Posterior vena cava (tissue), 2 donors: ENCODE measurements at regions of chr10 and their contacts with region 1.

Region 1: GRCh38 chr10:43890124-43890523 is 241.4 kb upstream of the ZNF32 start:
- DNase-seq: no peak

Region 2: DNA sequence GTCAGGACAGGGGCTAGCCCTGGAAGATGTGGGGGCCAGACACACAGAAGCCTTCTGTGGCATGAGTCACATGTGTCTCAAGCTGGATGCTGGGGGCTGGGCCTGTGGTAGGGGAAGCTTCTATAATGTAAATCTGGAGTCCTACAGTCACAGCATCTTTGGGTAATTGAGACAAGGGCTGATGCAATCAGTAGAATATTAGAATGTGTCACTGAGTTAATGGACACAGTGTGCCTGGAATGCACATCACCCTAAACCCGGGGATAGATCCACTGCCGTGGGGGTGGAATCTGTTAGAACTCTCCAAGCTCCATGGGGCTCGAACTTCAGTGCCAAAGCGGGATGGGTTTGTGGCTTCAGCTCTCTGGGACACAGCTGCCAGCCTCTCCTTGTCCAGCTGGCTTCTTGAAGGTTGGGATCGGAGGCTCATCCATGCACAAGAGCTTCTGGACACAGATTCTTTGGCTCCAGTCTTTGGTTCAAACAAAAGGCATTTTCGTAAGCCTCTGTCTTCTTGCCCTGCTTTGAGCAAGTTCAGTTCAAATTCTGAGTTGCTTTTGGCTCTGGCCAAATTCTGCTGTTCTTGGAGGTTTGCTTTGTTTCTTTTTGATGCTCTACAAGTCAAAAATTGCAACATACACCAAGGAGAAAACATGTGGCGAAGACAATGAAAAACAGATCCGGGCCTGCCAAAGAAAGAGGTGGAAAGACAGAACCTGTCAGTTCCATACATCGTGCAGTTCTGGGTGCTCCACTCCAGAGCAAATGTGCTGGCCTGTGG is 46.6 kb before region 1 on chr10:
- intact Hi-C with region 1: loop called in 1 of 2 experiments (anchors 2 kb)
- DNase-seq: no peak